ENCODE measurements at regions of chr6 and their contacts with region 1.

Region 1: DNA sequence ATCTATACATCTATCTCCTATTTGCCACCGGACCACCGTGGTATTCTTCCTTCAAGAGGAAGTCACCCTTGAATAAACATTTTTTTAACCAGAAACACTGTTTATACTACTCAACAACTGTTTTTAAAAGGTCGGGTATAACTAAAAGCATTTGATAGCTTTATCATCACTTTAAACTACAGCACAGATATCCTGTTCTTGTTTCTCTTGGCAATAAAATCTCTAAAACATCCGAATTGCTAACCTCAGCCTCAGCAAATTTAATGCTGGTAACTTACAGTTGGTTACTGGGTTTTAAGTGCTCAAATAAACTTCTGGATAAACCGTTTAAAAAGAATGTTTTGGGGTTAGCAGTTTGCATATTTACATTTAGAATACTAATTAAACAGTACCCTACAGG is 20.4 kb downstream of the ZUP1 start:
- DNase-seq: peak; percentile 93
- H3K4me3 ChIP-seq: peak overlapping the region in 1 of 3 experiments; percentile 42
- H3K27ac ChIP-seq: peak overlapping the region; percentile 36
- H3K4me1 ChIP-seq: peaks cover 24% of the 10 kb centered on the region
- H3K27me3 ChIP-seq: no peaks in the 10 kb centered on the region
- CTCF ChIP-seq: no peak
- POLR2A ChIP-seq: peak; percentile 66

Region 2: GRCh38 chr6:116561377-116562018 is 86.7 kb before region 1 on chr6:
- CTCF ChIA-PET with region 1: interaction called, 12 read pairs
- POLR2A ChIA-PET with region 1: no interaction called
- dilution Hi-C with region 1: no loop called
- intact Hi-C with region 1: no loop called
- DNase-seq: peak; percentile 84
- H3K4me3 ChIP-seq: no peak overlapping the region
- H3K27ac ChIP-seq: no peak overlapping the region
- H3K4me1 ChIP-seq: peaks cover 6% of the 10 kb centered on the region
- H3K27me3 ChIP-seq: no peaks in the 10 kb centered on the region
- CTCF ChIP-seq: peak; percentile 79 to 84
- POLR2A ChIP-seq: no peak

Region 3: GRCh38 chr6:116662202-116662601 is 14.0 kb after region 1 on chr6:
- CTCF ChIA-PET with region 1: interaction called, 18 read pairs
- POLR2A ChIA-PET with region 1: no interaction called
- dilution Hi-C with region 1: no loop called
- intact Hi-C with region 1: no loop called
- DNase-seq: no peak
- H3K4me3 ChIP-seq: no peak overlapping the region
- H3K27ac ChIP-seq: no peak overlapping the region
- H3K4me1 ChIP-seq: peaks cover 12% of the 10 kb centered on the region
- H3K27me3 ChIP-seq: no peaks in the 10 kb centered on the region
- CTCF ChIP-seq: no peak
- POLR2A ChIP-seq: no peak

Region 4: DNA sequence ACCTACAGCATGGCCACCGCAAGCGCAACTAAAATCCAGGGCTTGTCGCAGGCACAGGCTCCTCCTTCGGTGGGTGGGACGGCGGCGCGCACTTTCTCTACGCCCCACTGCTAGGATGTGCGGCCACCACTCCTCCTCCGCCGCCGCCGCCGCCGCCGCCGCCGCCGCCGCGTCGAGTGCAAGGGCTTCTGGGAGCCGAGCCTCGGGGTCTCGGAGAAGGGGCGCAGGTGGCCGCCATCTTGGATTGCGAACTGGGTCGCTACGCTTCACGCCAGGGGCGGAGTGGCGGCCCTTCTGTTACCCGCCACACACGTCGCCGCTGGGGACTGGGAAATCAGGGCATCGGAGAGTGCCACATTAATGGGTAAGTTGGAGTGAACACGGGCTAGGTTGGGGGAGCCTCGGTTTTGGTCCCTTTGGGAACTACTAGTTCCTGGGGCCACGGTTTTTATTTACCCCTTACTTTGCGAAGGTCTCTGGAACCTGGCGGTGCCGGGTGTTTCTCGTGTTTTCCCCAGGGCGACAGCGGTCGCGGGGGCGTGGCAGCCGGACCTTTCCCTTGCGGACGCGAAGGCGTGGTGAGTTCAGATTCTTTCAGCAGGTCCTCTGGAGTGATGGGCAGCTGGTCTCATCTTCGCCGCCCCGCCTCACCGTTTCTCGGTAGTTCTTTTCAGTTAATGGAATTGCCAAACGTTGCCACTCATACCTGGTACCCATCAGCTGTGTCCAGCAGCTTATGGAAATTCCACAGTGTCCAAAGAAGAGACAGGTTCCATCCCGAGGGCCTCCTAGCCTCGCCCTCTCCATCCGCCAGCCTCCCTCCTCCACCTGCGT is 33.0 kb after region 1 on chr6 and contains the start of gene KPNA5:
- CTCF ChIA-PET with region 1: interaction called, 4 read pairs
- POLR2A ChIA-PET with region 1: no interaction called
- dilution Hi-C with region 1: no loop called
- intact Hi-C with region 1: loop called (anchors 1 kb)
- DNase-seq: peak; percentile 94
- H3K4me3 ChIP-seq: peak within 1 kb of the TSS; percentile 61 to 85 (median 80)
- H3K27ac ChIP-seq: peak within 1 kb of the TSS; percentile 73
- H3K4me1 ChIP-seq: peaks cover 12% of the 10 kb centered on the region
- H3K27me3 ChIP-seq: no peaks in the 10 kb centered on the region
- CTCF ChIP-seq: no peak
- POLR2A ChIP-seq: peak; percentile 58
- total RNA-seq, gene KPNA5: 7.1 and 8.9 TPM in 2 replicates